ENCODE measurements at regions of chr1 and their contacts with region 1.

Region 1: DNA sequence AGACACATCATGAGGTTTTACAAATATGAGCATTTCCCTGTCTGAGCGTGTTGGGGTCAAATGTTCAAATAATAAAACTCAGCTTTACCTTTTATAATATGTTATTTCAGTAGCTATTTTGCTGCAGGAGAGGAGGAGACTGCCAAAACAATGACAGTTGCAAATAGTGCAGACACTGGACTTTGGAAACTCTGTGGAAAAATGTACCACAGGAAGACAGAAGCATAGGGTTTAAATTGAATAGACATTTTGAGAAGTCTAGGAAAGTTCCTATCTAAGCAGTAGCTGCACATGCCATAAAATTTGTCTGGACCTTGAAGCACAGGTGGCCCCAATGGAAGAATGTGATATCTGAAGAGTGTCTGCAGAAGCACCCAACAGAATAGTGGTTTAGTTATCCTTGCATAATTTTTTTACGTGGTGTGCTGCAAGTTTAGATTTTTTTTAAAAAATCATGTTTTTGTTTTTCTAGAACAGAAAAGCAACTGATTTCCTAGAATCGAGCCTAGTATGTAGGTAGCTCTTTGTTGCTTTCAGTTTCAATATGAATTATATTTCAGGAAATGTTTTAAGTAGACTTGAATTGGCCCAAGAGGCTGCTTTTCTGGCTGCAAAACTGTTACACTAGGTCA is 14.0 kb upstream of the GBP5 start:
- DNase-seq: no peak
- ATAC-seq: peak; percentile 77
- H3K4me3 Mint-ChIP-seq: peak overlapping the region; percentile 44
- H3K27ac Mint-ChIP-seq: peak overlapping the region; percentile 93
- H3K4me1 Mint-ChIP-seq: peaks cover 74% of the 10 kb centered on the region
- H3K27me3 Mint-ChIP-seq: no peaks in the 10 kb centered on the region

Region 2: GRCh38 chr1:89198491-89199072 is 88.1 kb before region 1 on chr1 and contains the start of gene GBP4:
- CTCF ChIA-PET with region 1: no interaction called
- POLR2A ChIA-PET with region 1: no interaction called
- intact Hi-C with region 1: loop called in 1 of 2 experiments (anchors 5 kb)
- DNase-seq: peak; percentile 63
- ATAC-seq: peak; percentile 67
- H3K4me3 Mint-ChIP-seq: peak within 1 kb of the TSS; percentile 83
- H3K27ac Mint-ChIP-seq: peak within 1 kb of the TSS; percentile 98
- H3K4me1 Mint-ChIP-seq: peaks cover 73% of the 10 kb centered on the region
- H3K27me3 Mint-ChIP-seq: no peaks in the 10 kb centered on the region
- total RNA-seq, gene GBP4: 30.8 to 34.4 TPM

Region 3: GRCh38 chr1:89298461-89298860 is 11.8 kb after region 1 on chr1:
- CTCF ChIA-PET with region 1: interaction called, 4 read pairs
- POLR2A ChIA-PET with region 1: interaction called, 4 read pairs
- intact Hi-C with region 1: loop called (anchors 1 kb)
- DNase-seq: no peak
- ATAC-seq: peak; percentile 16
- H3K4me3 Mint-ChIP-seq: no peak overlapping the region
- H3K27ac Mint-ChIP-seq: no peak overlapping the region
- H3K4me1 Mint-ChIP-seq: peaks cover 59% of the 10 kb centered on the region
- H3K27me3 Mint-ChIP-seq: no peaks in the 10 kb centered on the region

Region 4: GRCh38 chr1:89310505-89310904 is 23.8 kb after region 1 on chr1:
- CTCF ChIA-PET with region 1: interaction called, 9 read pairs
- POLR2A ChIA-PET with region 1: interaction called, 4 read pairs
- intact Hi-C with region 1: loop called in 1 of 2 experiments (anchors 1 kb)
- DNase-seq: no peak
- ATAC-seq: peak; percentile 78
- H3K4me3 Mint-ChIP-seq: no peak overlapping the region
- H3K27ac Mint-ChIP-seq: peak overlapping the region; percentile 86
- H3K4me1 Mint-ChIP-seq: peaks cover 34% of the 10 kb centered on the region
- H3K27me3 Mint-ChIP-seq: no peaks in the 10 kb centered on the region

Region 5: DNA sequence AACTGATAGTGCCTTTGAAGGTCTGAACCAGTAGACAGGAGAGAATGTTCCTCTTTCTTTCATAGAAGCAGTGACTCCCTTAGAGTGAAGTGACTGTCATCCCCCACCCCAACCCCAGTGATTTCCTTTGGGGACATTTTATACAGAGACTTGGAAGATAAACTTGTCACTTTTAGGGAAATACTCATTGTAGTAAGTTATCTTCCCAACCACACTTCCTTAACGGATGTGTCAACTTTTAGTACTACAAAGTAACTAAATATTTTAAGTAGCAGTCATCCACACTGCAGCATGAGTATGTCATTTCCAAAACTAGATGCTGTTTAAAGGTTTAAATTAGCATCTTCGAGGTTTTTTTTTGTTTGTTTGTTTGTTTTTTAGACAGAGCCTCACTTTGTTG is 251.7 kb after region 1 on chr1:
- CTCF ChIA-PET with region 1: no interaction called
- POLR2A ChIA-PET with region 1: no interaction called
- intact Hi-C with region 1: loop called in 1 of 2 experiments (anchors 5 kb)
- DNase-seq: peak; percentile 31
- ATAC-seq: peak; percentile 27
- H3K4me3 Mint-ChIP-seq: no peak overlapping the region
- H3K27ac Mint-ChIP-seq: peak overlapping the region; percentile 88
- H3K4me1 Mint-ChIP-seq: peaks cover 90% of the 10 kb centered on the region
- H3K27me3 Mint-ChIP-seq: no peaks in the 10 kb centered on the region

Region 6: GRCh38 chr1:89615676-89616598 is 329.3 kb after region 1 on chr1:
- CTCF ChIA-PET with region 1: no interaction called
- POLR2A ChIA-PET with region 1: no interaction called
- intact Hi-C with region 1: loop called in 1 of 2 experiments (anchors 2 kb)
- DNase-seq: peak; percentile 46
- ATAC-seq: no peak
- H3K4me3 Mint-ChIP-seq: no peak overlapping the region
- H3K27ac Mint-ChIP-seq: no peak overlapping the region
- H3K4me1 Mint-ChIP-seq: peaks cover 86% of the 10 kb centered on the region
- H3K27me3 Mint-ChIP-seq: no peaks in the 10 kb centered on the region